ENCODE measurements at regions of chr9 and their contacts with region 1.

Region 1: DNA sequence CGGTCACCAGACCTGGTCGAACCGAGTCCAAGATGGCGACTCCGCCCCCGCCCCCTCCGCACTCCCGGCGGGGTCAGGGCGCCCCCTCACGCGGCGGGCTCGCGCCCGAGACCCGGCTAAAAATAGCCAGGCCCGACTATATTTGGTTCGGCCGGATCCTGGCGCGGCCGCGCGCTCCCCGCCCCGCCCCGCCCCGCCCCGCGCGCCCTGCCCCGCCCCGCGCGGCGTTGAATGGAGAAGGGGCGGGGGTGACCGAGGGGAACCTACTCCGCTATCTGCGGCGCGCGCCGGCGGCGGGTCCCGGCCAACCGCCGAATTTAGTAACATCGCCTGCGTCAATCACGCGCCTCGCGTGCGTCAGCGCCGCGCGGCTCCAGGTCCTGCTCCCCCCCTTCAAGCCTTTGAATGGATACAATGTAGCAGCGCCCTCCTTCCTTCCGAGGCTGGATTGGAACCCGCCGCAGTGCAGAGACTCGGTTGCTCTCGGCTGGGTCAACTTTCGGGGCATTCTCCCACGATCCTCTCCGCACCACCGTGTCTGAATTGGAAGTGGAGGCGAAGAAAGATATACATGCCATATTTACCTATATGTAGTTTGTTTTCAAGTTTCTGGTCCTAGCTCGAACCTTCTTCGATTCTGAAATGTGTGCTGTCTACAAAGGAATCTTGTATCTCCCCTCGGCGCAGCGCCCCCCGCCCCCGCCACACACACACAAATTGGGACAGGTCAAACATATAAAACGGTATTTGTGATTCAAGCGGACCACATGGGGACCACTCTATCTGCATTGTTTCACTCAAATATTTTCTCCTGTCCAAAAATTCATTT is 1.6 kb upstream of the NR4A3 start:
- DNase-seq: peak; percentile 89
- H3K4me3 Mint-ChIP-seq: peak overlapping the region; percentile 90
- H3K27ac Mint-ChIP-seq: peak overlapping the region; percentile 41
- H3K4me1 Mint-ChIP-seq: peaks cover 9% of the 10 kb centered on the region
- H3K27me3 Mint-ChIP-seq: peaks cover 31% of the 10 kb centered on the region
- CTCF ChIP-seq: no peak

Region 2: GRCh38 chr9:99906403-99907207 is 86.5 kb after region 1 on chr9 and contains the start of gene STX17:
- CTCF ChIA-PET with region 1: no interaction called
- intact Hi-C with region 1: loop called (anchors 1 kb)
- DNase-seq: peak; percentile 79
- H3K4me3 Mint-ChIP-seq: peak within 1 kb of the TSS; percentile 94
- H3K27ac Mint-ChIP-seq: peak within 1 kb of the TSS; percentile 68
- H3K4me1 Mint-ChIP-seq: peaks cover 28% of the 10 kb centered on the region
- H3K27me3 Mint-ChIP-seq: no peaks in the 10 kb centered on the region
- CTCF ChIP-seq: no peak
- total RNA-seq, gene STX17: 21.5 and 22.9 TPM in 2 replicates

Region 3: DNA sequence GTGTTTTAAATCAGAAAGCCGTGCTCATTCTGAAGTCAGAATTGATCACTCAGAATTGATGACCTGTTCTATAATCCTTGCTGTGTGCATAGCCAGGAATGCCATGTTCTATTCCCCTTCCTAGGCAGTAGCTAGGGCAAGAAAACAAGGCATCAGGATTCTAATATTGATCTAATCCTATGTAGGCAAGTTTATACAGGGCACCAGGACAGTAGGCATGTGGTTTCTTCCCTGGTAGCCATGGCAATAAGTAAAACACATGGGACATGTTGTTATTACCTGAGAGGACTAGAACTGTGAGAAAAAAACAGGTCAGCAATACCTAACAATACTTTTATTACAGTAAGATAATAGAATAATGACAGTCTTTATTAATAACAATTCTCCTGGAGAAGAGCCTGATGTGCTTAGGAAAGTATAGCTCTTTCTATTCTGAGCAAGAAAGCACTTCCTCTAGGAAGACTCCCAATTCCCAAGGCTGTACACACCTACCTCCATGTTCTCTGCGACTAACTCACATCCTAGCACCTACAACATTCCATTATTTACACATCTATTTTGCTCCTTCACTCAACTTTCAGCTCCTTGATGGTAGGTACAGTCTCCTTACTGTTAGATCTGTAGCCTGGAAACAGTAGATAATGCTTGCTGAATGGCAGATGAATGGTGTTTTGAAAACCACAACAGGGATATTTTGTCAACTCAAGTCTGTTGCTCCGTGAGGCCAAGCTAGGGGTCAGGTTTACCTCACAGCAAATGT is 157.1 kb after region 1 on chr9:
- CTCF ChIA-PET with region 1: no interaction called
- intact Hi-C with region 1: no loop called
- DNase-seq: no peak
- H3K4me3 Mint-ChIP-seq: no peak overlapping the region
- H3K27ac Mint-ChIP-seq: no peak overlapping the region
- H3K4me1 Mint-ChIP-seq: no peaks in the 10 kb centered on the region
- H3K27me3 Mint-ChIP-seq: no peaks in the 10 kb centered on the region
- CTCF ChIP-seq: no peak

Region 4: DNA sequence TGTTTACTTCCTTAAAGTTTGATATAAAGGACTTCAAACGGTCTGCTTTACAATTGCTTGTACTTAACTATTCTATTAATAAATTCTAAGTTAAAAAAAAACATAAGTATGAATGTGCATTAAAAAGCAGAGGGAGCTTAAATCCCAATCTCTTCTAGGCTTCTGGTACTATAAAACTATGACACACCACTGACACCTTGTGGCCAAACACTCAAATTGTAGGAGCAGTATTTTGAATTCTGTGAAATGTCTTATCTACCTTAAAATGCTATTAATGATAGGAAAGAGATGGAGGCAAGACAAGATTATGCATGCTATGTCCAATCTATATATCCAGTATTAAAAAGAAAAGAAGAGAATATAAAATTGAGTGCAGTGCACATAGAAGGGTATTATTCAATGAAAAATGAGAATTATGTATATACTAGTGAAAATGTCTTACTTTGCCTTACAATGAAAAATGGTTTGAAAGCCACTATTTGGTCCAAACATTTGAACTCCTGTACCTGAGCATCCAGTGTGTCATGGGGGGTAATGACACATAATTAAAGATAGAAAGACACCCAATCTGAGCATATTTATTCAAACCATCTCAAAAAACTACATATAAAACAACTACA is 191.1 kb after region 1 on chr9:
- CTCF ChIA-PET with region 1: no interaction called
- intact Hi-C with region 1: loop called (anchors 5 kb)
- DNase-seq: peak; percentile 13
- H3K4me3 Mint-ChIP-seq: no peak overlapping the region
- H3K27ac Mint-ChIP-seq: no peak overlapping the region
- H3K4me1 Mint-ChIP-seq: no peaks in the 10 kb centered on the region
- H3K27me3 Mint-ChIP-seq: no peaks in the 10 kb centered on the region
- CTCF ChIP-seq: peak; percentile 14

Measured in Calu3 (cell line).